Psoas muscle (tissue), 8 donors: ENCODE measurements at regions of chr5 and their contacts with region 1.

Region 1: GRCh38 chr5:37668524-37669047 is 171.3 kb downstream of the GDNF start:
- DNase-seq: peak; percentile 67 to 85
- ATAC-seq: peak; percentile 87 to 93 (median 90)
- H3K4me3 ChIP-seq: no peak overlapping the region
- H3K27ac ChIP-seq: peak overlapping the region; percentile 93
- H3K4me1 ChIP-seq: peaks cover 47% of the 10 kb centered on the region
- H3K27me3 ChIP-seq: no peaks in the 10 kb centered on the region
- CTCF ChIP-seq: no peak

Region 2: DNA sequence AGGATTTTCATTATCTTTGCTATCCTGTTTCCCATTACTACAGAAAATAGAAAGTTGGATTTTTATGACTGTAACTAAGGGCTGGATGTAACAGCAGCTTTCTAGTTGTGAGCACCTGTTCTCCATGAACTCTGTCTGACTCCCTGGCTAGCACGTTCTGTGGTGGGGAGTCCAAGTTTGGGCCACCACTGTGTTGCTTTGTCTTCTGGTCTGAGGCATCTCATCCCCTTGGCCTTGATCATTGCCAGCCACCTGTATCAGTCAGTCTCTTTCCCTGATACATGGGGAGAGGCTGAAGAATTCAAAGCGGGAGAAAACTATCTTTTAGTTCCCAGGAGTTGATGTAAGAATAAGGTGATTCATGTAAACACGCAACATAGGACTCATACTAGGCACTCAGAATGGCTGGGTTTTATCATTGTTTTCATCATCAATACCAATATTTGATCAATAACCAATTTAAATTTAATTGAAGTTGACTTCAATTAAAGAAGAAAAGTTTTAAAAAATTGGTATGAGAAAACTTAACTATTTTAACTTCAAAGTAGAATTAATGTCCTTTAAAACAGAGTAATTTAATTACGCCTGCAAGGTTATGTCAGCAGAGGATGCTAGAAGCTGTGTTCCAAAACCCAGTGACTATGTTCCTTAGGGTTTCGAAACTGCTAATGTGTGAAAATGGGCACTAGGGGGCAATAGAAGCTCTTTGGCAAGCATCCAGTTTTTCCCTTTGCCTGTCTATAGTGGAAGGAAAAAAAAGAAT is 255.9 kb before region 1 on chr5:
- intact Hi-C with region 1: loop called in 1 of 2 experiments (anchors 10 kb)
- DNase-seq: no peak
- ATAC-seq: peak; percentile 87 to 96 (median 93)
- H3K4me3 ChIP-seq: no peak overlapping the region
- H3K27ac ChIP-seq: no peak overlapping the region
- H3K4me1 ChIP-seq: no peaks in the 10 kb centered on the region
- H3K27me3 ChIP-seq: no peaks in the 10 kb centered on the region
- CTCF ChIP-seq: peak; percentile 83

Region 3: GRCh38 chr5:37604290-37604689 is 64.3 kb before region 1 on chr5:
- intact Hi-C with region 1: loop called in 1 of 2 experiments (anchors 10 kb)
- DNase-seq: no peak
- ATAC-seq: peak; percentile 60 to 79 (median 70)
- H3K4me3 ChIP-seq: no peak overlapping the region
- H3K27ac ChIP-seq: no peak overlapping the region
- H3K4me1 ChIP-seq: peaks cover 8% of the 10 kb centered on the region
- H3K27me3 ChIP-seq: no peaks in the 10 kb centered on the region
- CTCF ChIP-seq: no peak